A673 (cell line): ENCODE measurements at regions of chr1 and their contacts with region 1.

Region 1: GRCh38 chr1:111769517-111770146 is 13.9 kb downstream of the DDX20 start:
- DNase-seq: peak; percentile 78
- H3K4me3 ChIP-seq: no peak overlapping the region
- H3K27ac ChIP-seq: no peak overlapping the region
- H3K4me1 ChIP-seq: no peaks in the 10 kb centered on the region
- H3K27me3 ChIP-seq: no peaks in the 10 kb centered on the region
- CTCF ChIP-seq: peak; percentile 86

Region 2: DNA sequence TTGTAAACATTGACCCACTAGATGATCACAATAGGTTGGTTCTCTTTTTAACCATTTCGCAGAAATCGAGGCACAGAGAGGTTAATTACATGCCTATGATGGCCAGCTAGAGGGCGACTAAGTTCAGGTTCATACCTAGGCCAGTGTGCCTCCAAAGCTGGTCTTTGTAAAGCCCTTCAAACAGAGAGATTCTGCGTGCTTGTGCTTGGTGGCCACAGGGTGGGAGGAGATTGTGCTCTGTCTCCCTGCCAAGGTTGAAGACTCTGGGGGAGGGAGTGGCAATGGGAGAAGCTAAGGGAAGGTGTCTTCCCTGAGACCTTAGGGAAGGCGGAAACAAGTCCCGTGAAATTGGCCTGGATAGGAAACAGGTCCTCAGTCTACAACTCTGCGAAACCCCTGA is 1489.5 kb before region 1 on chr1:
- CTCF ChIA-PET with region 1: interaction called, 10 read pairs
- POLR2A ChIA-PET with region 1: no interaction called
- intact Hi-C with region 1: no loop called
- DNase-seq: no peak
- H3K4me3 ChIP-seq: no peak overlapping the region
- H3K27ac ChIP-seq: no peak overlapping the region
- H3K4me1 ChIP-seq: no peaks in the 10 kb centered on the region
- H3K27me3 ChIP-seq: peaks cover 6% of the 10 kb centered on the region
- CTCF ChIP-seq: no peak

Region 3: DNA sequence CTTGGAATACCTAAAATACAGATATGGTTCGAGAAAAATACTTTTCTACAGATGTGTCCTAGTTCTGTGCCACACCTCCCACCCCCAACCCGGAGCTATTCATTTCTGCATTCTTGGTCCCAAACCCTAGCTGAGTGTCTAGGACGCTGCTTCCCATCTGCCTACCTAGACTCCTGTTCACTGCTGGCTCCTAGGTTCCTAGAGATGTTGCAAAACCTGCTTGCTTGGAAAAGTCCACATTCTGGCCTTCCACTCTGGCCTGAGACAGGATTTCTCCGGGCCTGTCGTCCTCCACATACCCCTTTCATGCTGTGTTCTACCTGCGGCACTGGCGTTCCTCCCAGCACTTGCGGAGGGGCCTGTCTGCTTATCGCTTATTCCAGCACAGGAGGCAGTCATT is 460.6 kb after region 1 on chr1:
- CTCF ChIA-PET with region 1: no interaction called
- POLR2A ChIA-PET with region 1: no interaction called
- intact Hi-C with region 1: no loop called
- DNase-seq: no peak
- H3K4me3 ChIP-seq: no peak overlapping the region
- H3K27ac ChIP-seq: no peak overlapping the region
- H3K4me1 ChIP-seq: no peaks in the 10 kb centered on the region
- H3K27me3 ChIP-seq: peaks cover 37% of the 10 kb centered on the region
- CTCF ChIP-seq: no peak